Caco-2 (cell line): ENCODE measurements at regions of chr6 and their contacts with region 1.

Region 1: GRCh38 chr6:34425498-34426410 is at the start of gene RPS10:
- DNase-seq: peak; percentile 93 to 97
- H3K4me3 ChIP-seq: peak within 1 kb of the TSS; percentile 96
- H3K4me3 Mint-ChIP-seq: peak within 1 kb of the TSS; percentile 94
- H3K27ac Mint-ChIP-seq: peak within 1 kb of the TSS; percentile 98
- H3K4me1 ChIP-seq: peaks cover 13% of the 10 kb centered on the region
- H3K4me1 Mint-ChIP-seq: no peaks in the 10 kb centered on the region
- H3K27me3 ChIP-seq: no peaks in the 10 kb centered on the region
- H3K27me3 Mint-ChIP-seq: no peaks in the 10 kb centered on the region
- CTCF ChIP-seq: peak in 1 of 2 experiments; percentile 26
- total RNA-seq, gene RPS10: 1,650 and 1,752 TPM in 2 replicates

Region 2: GRCh38 chr6:34302929-34303328 is 122.8 kb before region 1 on chr6:
- CTCF ChIA-PET with region 1: no interaction called
- POLR2A ChIA-PET with region 1: interaction called, 10 read pairs
- intact Hi-C with region 1: no loop called
- DNase-seq: no peak
- H3K4me3 ChIP-seq: no peak overlapping the region
- H3K4me3 Mint-ChIP-seq: no peak overlapping the region
- H3K27ac Mint-ChIP-seq: no peak overlapping the region
- H3K4me1 ChIP-seq: peaks cover 22% of the 10 kb centered on the region
- H3K4me1 Mint-ChIP-seq: peaks cover 17% of the 10 kb centered on the region
- H3K27me3 ChIP-seq: no peaks in the 10 kb centered on the region
- H3K27me3 Mint-ChIP-seq: no peaks in the 10 kb centered on the region
- CTCF ChIP-seq: no peak

Region 3: GRCh38 chr6:34383161-34383631 is 42.6 kb before region 1 on chr6:
- CTCF ChIA-PET with region 1: no interaction called
- POLR2A ChIA-PET with region 1: no interaction called
- intact Hi-C with region 1: no loop called
- DNase-seq: no peak
- H3K4me3 ChIP-seq: no peak overlapping the region
- H3K4me3 Mint-ChIP-seq: no peak overlapping the region
- H3K27ac Mint-ChIP-seq: no peak overlapping the region
- H3K4me1 ChIP-seq: peaks cover 6% of the 10 kb centered on the region; the same call in 1 of the 2 replicates
- H3K4me1 Mint-ChIP-seq: peaks cover 13% of the 10 kb centered on the region
- H3K27me3 ChIP-seq: no peaks in the 10 kb centered on the region
- H3K27me3 Mint-ChIP-seq: no peaks in the 10 kb centered on the region
- CTCF ChIP-seq: no peak